ENCODE measurements at regions of chr22 and their contacts with region 1.

Region 1: DNA sequence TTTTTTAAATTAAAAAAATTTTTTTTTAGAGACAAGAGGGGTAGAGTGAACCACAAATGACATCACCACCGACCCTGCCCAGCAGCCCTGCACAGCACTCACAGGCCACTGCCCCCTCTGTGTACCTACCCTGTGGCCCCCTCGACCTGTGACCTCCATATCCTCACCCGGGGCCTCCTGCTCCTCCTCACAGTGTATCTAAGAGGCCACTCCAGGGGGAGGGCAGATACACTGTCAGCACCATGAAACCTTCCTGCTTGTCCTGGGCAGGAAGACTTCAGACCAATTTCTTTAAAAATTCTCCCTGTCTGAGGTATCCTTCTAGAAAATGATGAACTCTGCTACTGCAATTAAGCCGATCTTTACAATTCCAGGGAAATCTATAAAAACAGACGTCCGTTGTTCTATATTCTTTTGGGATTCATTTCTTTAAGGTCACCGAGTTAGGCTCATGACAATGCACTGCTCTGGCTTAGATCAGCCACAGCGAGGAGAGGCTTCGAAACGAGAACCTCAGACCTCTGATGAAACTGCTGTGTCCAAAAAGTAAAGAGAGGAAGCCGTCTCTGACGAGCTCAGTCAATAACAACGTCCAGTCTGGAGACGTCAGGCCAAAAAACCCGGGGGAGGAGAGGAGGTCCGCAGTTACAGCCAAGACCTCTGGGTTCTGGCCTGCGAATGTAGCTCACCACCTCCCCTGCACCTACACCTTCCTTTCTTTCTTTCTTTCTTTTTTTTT is 17.5 kb downstream of the NFAM1 start:
- DNase-seq: no peak
- ATAC-seq: no peak
- H3K4me3 ChIP-seq: no peak overlapping the region
- H3K27ac ChIP-seq: no peak overlapping the region
- H3K4me1 ChIP-seq: no peaks in the 10 kb centered on the region
- H3K27me3 ChIP-seq: no peaks in the 10 kb centered on the region
- CTCF ChIP-seq: no peak

Region 2: GRCh38 chr22:42134100-42135020 is 280.4 kb before region 1 on chr22:
- CTCF ChIA-PET with region 1: no interaction called
- POLR2A ChIA-PET with region 1: no interaction called
- intact Hi-C with region 1: no loop called
- DNase-seq: no peak
- ATAC-seq: no peak
- H3K4me3 ChIP-seq: no peak overlapping the region
- H3K27ac ChIP-seq: no peak overlapping the region
- H3K4me1 ChIP-seq: no peaks in the 10 kb centered on the region
- H3K27me3 ChIP-seq: no peaks in the 10 kb centered on the region
- CTCF ChIP-seq: no peak

Region 3: GRCh38 chr22:42511401-42511891 is 96.7 kb after region 1 on chr22:
- CTCF ChIA-PET with region 1: no interaction called
- POLR2A ChIA-PET with region 1: interaction called, 12 read pairs
- intact Hi-C with region 1: no loop called
- DNase-seq: no peak
- ATAC-seq: no peak
- H3K4me3 ChIP-seq: no peak overlapping the region
- H3K27ac ChIP-seq: no peak overlapping the region
- H3K4me1 ChIP-seq: no peaks in the 10 kb centered on the region
- H3K27me3 ChIP-seq: no peaks in the 10 kb centered on the region
- CTCF ChIP-seq: no peak

Measured in PC-3 (cell line).